GM13977 (cell line): ENCODE measurements at regions of chr2 and their contacts with region 1.

Region 1: DNA sequence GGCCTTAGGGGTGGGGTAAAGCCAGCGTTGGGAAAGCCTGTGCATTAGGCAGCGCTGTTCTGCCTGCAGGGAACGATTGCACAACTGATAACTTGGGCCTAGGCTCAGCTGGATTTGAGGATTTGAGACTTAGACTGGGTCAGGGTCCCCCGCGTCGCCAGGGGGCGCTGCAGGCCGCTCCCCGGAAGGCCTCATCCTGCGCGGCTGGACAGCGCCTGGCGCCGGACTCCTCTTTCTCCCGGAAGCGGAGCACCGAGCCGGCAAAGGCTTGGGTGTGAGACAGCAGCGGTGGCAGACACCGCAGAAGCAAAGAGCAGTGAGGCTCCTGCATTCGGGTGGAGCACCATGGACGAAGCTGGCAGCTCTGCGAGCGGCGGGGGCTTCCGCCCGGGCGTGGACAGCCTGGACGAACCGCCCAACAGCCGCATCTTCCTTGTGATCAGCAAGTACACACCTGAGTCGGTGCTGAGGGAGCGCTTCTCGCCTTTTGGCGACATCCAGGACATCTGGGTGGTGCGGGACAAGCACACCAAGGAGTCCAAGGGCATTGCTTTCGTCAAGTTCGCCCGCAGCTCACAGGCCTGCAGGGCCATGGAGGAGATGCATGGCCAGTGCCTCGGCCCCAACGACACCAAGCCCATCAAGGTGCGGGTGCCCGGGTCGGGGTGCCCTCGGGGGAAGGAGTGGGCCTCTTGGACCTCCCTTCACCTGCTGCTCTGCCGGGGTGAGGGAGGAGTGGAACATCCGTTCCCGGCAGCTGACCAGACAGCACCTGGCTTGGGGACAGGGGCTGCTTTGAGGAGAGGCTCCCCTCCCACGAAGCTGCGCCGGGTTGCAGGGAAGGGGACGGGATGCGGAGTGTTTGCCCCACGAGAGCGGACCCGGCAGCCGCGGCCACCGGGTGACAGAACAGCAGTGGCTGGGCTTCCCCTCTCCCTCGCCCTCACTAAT is at the start of gene RBM45:
- DNase-seq: peak; percentile 88
- CTCF ChIP-seq: peak; percentile 96

Region 2: GRCh38 chr2:178414266-178415247 is 302.1 kb after region 1 on chr2:
- in situ Hi-C with region 1: loop called (anchors 25 kb)
- DNase-seq: peak; percentile 64
- CTCF ChIP-seq: peak; percentile 90